GM12878 (cell line): ENCODE measurements at regions of chr3 and their contacts with region 1.

Region 1: DNA sequence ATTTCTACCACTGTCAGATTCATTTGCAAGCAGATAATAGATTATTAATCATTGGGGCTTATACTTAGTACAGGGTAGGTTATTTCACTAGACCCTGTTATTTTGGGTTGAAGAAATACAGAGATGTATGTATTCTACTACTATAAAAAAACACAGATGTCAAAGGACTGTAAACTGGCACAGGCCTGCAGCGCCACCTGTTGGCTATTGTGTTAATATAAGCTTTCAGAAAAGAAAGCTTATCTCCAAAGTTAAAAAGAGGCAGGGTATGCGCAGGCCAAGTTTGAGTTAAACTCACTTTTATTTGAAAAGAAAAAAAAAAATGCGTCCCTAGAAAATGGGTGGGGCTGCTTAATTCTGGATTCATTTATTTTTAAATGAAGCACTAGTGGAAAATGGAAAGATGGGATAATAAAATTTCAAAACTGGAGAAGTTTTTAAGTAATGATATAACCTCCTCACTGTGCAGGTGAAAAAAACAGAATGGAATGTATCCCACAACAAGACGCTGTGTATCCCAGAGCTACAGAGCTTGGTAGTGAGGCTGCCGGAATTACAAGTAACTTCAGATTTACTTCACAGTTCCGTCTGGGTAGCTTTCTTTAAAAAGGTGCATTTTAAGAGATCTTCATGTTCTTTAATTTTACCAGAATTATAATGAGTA is 407.2 kb upstream of the TGFBR2 start:
- DNase-seq: no peak
- ATAC-seq: peak; percentile 69
- H3K4me3 ChIP-seq: no peak overlapping the region
- H3K27ac ChIP-seq: no peak overlapping the region
- H3K4me1 ChIP-seq: no peaks in the 10 kb centered on the region
- H3K27me3 ChIP-seq: no peaks in the 10 kb centered on the region; a peak in 1 of 4 replicates
- CTCF ChIP-seq: peak; percentile 63 to 78 (median 67)
- EP300 ChIP-seq: no peak
- POLR2A ChIP-seq: no peak
- RAD21 ChIP-seq: peak; percentile 88

Region 2: DNA sequence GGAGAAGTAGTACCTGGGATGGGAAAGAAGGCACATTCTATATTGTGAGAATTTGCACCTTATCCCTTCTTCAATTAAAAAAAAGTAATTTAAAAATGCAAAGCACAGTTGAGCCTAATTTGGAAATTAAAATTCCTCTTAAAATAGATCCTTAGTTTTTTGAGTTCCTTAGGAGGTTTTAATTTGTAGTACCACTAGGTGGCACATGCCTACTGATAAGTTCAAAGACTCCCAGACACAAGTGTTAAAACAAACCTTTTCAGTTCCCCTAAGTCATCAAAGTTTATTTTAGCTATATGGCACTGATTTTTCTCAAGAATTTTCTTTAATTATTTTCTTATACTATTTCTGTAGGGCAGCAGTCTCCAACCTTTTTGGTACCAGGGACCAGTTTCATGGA is 1723.0 kb before region 1 on chr3:
- CTCF ChIA-PET with region 1: interaction called, 7 read pairs
- POLR2A ChIA-PET with region 1: no interaction called
- RAD21 ChIA-PET with region 1: interaction called, 4 read pairs
- SMC1A ChIA-PET with region 1: interaction called, 3 read pairs
- in situ Hi-C with region 1: loop called (anchors 10 kb)
- intact Hi-C with region 1: loop called (anchors 5 kb)
- DNase-seq: peak; percentile 5
- ATAC-seq: peak; percentile 72
- H3K4me3 ChIP-seq: no peak overlapping the region
- H3K27ac ChIP-seq: no peak overlapping the region
- H3K4me1 ChIP-seq: no peaks in the 10 kb centered on the region
- H3K27me3 ChIP-seq: no peaks in the 10 kb centered on the region
- CTCF ChIP-seq: peak; percentile 46 to 59 (median 53); a peak in 5 of 6 replicates
- EP300 ChIP-seq: no peak
- POLR2A ChIP-seq: no peak
- RAD21 ChIP-seq: peak; percentile 42

Region 3: DNA sequence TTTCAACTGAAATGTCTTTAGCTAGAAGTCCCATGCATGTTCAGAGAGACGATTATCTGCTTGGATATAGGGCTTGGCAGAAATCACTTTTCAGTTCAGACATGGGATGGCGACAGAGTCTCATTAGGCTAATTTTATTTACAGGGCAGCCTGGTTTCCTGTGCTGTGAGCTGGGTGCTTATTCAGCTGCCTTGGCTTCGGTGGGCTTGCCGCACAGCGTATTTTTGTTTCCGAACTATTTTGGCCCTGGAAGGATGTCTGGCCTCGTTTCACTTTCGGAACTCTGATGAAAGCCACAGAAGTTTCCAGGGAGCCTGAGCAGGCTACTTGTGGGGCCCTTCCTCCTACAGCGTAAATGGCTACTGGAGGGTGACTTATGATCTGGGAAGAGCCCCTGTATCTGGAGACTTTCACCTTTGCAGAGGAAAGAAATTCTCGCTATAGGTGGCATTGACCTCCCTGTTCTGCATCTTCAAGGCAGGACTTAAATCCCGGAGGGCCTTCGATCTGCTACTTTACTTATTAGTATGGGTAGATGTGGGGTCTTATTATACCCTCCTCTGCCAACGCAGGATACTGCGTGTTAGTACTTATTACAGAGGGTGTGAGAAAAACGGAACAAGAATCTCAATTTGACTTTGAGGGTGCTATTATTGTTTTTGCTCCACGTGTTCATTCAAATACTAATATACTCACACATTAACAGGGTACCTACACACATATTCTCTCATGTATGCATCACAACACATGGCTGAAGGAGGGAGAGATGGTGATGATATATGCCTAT is 1282.3 kb before region 1 on chr3:
- CTCF ChIA-PET with region 1: interaction called, 31 read pairs
- POLR2A ChIA-PET with region 1: no interaction called
- RAD21 ChIA-PET with region 1: interaction called, 33 read pairs
- SMC1A ChIA-PET with region 1: interaction called, 17 read pairs
- in situ Hi-C with region 1: loop called (anchors 25 kb)
- intact Hi-C with region 1: loop called (anchors 2 kb)
- DNase-seq: peak; percentile 61
- ATAC-seq: peak; percentile 95
- H3K4me3 ChIP-seq: no peak overlapping the region
- H3K27ac ChIP-seq: no peak overlapping the region
- H3K4me1 ChIP-seq: peaks cover 20% of the 10 kb centered on the region
- H3K27me3 ChIP-seq: no peaks in the 10 kb centered on the region
- CTCF ChIP-seq: peak; percentile 61 to 78 (median 66)
- EP300 ChIP-seq: no peak
- POLR2A ChIP-seq: no peak
- RAD21 ChIP-seq: peak; percentile 91

Region 4: GRCh38 chr3:30042274-30042859 is 156.9 kb before region 1 on chr3:
- CTCF ChIA-PET with region 1: interaction called, 86 read pairs
- POLR2A ChIA-PET with region 1: no interaction called
- RAD21 ChIA-PET with region 1: interaction called, 33 read pairs
- SMC1A ChIA-PET with region 1: interaction called, 31 read pairs
- in situ Hi-C with region 1: no loop called
- intact Hi-C with region 1: loop called (anchors 1 kb)
- DNase-seq: peak; percentile 1
- ATAC-seq: peak; percentile 88
- H3K4me3 ChIP-seq: no peak overlapping the region
- H3K27ac ChIP-seq: no peak overlapping the region
- H3K4me1 ChIP-seq: no peaks in the 10 kb centered on the region
- H3K27me3 ChIP-seq: no peaks in the 10 kb centered on the region
- CTCF ChIP-seq: peak; percentile 57 to 68 (median 59); a peak in 5 of 6 replicates
- EP300 ChIP-seq: no peak
- POLR2A ChIP-seq: no peak
- RAD21 ChIP-seq: peak; percentile 71

Region 5: GRCh38 chr3:30180310-30181177 is 18.7 kb before region 1 on chr3:
- CTCF ChIA-PET with region 1: interaction called, 31 read pairs
- POLR2A ChIA-PET with region 1: no interaction called
- RAD21 ChIA-PET with region 1: no interaction called
- SMC1A ChIA-PET with region 1: interaction called, 7 read pairs
- in situ Hi-C with region 1: no loop called
- intact Hi-C with region 1: no loop called
- DNase-seq: no peak
- ATAC-seq: no peak
- H3K4me3 ChIP-seq: no peak overlapping the region
- H3K27ac ChIP-seq: no peak overlapping the region
- H3K4me1 ChIP-seq: no peaks in the 10 kb centered on the region
- H3K27me3 ChIP-seq: no peaks in the 10 kb centered on the region
- CTCF ChIP-seq: no peak
- EP300 ChIP-seq: no peak
- POLR2A ChIP-seq: no peak
- RAD21 ChIP-seq: no peak

Region 6: GRCh38 chr3:30248423-30248822 is 49.2 kb after region 1 on chr3:
- CTCF ChIA-PET with region 1: interaction called, 11 read pairs
- POLR2A ChIA-PET with region 1: no interaction called
- RAD21 ChIA-PET with region 1: no interaction called
- SMC1A ChIA-PET with region 1: no interaction called
- in situ Hi-C with region 1: no loop called
- intact Hi-C with region 1: no loop called
- DNase-seq: peak; percentile 1
- ATAC-seq: peak; percentile 68
- H3K4me3 ChIP-seq: no peak overlapping the region
- H3K27ac ChIP-seq: no peak overlapping the region
- H3K4me1 ChIP-seq: no peaks in the 10 kb centered on the region
- H3K27me3 ChIP-seq: no peaks in the 10 kb centered on the region
- CTCF ChIP-seq: no peak
- EP300 ChIP-seq: no peak
- POLR2A ChIP-seq: no peak
- RAD21 ChIP-seq: no peak

Region 7: DNA sequence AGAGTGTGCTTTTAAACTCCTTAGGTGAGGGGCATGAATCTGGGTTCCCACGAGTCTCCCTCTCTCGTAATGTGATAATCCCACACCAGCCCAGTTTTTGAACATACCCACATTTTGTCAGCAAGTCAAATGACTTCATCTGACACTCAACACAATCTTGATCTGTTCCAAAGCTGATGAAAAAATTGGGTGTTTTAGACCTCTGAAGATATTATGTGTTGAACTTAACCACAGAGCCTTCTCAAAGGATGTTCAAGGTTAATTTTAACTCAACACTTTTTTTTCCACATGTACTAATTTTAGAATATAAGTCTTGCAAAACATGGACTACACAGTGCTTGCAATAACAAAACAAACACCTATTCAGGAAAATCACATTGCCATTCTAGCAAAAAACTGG is 530.3 kb after region 1 on chr3:
- CTCF ChIA-PET with region 1: no interaction called
- POLR2A ChIA-PET with region 1: no interaction called
- RAD21 ChIA-PET with region 1: no interaction called
- SMC1A ChIA-PET with region 1: no interaction called
- in situ Hi-C with region 1: no loop called
- intact Hi-C with region 1: no loop called
- DNase-seq: no peak
- ATAC-seq: no peak
- H3K4me3 ChIP-seq: no peak overlapping the region
- H3K27ac ChIP-seq: no peak overlapping the region
- H3K4me1 ChIP-seq: no peaks in the 10 kb centered on the region
- H3K27me3 ChIP-seq: no peaks in the 10 kb centered on the region; a peak in 1 of 4 replicates
- CTCF ChIP-seq: no peak
- EP300 ChIP-seq: no peak
- POLR2A ChIP-seq: no peak
- RAD21 ChIP-seq: no peak

Region 8: GRCh38 chr3:31010491-31010890 is 811.3 kb after region 1 on chr3:
- CTCF ChIA-PET with region 1: no interaction called
- POLR2A ChIA-PET with region 1: no interaction called
- RAD21 ChIA-PET with region 1: no interaction called
- SMC1A ChIA-PET with region 1: no interaction called
- in situ Hi-C with region 1: no loop called
- intact Hi-C with region 1: no loop called
- DNase-seq: no peak
- ATAC-seq: no peak
- H3K4me3 ChIP-seq: no peak overlapping the region
- H3K27ac ChIP-seq: no peak overlapping the region
- H3K4me1 ChIP-seq: no peaks in the 10 kb centered on the region
- H3K27me3 ChIP-seq: no peaks in the 10 kb centered on the region
- CTCF ChIP-seq: no peak
- EP300 ChIP-seq: no peak
- POLR2A ChIP-seq: no peak
- RAD21 ChIP-seq: no peak